Gastrocnemius medialis (tissue), 4 donors: ENCODE measurements at regions of chr4 and their contacts with region 1.

Region 1: DNA sequence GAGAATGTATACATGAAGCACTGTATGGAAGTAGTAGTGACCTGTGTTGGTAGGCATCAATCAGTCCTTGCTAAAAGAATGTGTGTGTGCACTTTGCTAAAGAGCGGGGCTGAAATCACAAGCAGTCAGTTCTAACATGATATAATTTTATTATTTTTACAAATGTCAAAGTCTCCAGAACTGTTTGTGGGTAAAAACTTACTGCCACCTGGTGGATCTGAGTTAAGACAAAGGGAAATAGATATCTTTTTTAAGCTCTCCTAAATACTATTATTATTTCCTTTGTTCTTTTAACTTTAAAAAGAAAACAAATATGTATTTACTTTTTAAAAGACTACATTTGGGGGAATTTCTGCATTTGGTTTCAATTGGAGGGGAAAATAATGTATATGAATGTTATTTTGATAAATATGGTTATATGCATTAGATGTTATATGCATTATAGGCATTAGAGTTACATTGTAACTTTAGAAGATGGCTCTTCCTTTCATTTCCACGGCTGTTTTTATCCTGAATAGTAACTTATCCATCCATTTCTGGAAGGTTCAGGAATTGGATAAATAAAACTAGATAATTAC is 7.8 kb upstream of the CLOCK start:
- DNase-seq: no peak
- ATAC-seq: no peak
- H3K4me3 ChIP-seq: no peak overlapping the region
- H3K27ac ChIP-seq: no peak overlapping the region
- H3K4me1 ChIP-seq: no peaks in the 10 kb centered on the region
- H3K27me3 ChIP-seq: no peaks in the 10 kb centered on the region
- CTCF ChIP-seq: peak in 2 of 5 experiments; percentile 34 to 52
- POLR2A ChIP-seq: no peak

Region 2: DNA sequence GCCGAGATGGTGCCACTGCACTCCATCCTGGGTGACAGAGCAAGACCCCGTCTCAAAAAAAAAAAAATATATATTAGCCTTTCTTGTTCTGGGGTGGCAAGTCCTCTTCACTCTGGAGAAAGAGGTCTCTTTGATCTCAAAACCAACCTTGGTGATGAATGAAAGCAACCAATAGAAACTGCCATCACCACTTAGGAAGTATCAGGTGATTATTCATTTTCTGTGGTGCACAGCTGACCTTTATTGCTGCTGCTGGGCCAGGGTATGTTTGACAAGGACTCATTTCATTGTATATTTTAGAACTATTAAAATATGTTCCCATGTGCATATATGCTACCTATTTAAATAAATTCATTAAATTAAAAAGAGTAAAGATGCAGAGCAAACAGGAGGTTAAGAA is 972.7 kb before region 1 on chr4:
- in situ Hi-C with region 1: no loop called
- intact Hi-C with region 1: no loop called
- DNase-seq: no peak
- ATAC-seq: no peak
- H3K4me3 ChIP-seq: no peak overlapping the region
- H3K27ac ChIP-seq: no peak overlapping the region
- H3K4me1 ChIP-seq: no peaks in the 10 kb centered on the region
- H3K27me3 ChIP-seq: no peaks in the 10 kb centered on the region
- CTCF ChIP-seq: no peak
- POLR2A ChIP-seq: no peak

Region 3: DNA sequence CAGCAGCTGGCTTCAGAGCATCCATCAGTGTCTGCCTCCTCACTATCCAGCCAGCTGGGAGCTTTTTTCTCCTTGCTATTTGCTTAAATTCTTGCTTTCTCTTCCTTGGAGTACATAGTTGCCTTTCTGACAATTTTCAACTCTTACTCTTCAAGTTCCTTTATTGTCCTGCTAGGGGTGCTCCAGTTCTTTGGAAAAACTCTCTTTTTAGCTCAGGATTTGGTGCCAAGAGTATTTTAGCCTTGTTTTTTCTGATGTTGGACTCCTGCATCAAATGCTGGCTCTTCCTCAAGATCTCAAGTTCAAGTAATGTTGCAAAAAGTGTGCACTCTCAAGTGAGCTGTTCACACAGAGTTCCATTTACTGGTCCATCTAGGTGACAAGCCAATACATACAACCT is 555.5 kb before region 1 on chr4:
- in situ Hi-C with region 1: loop called in 1 of 4 experiments (anchors 25 kb)
- intact Hi-C with region 1: no loop called
- DNase-seq: no peak
- ATAC-seq: peak in 1 of 2 donors; percentile 50
- H3K4me3 ChIP-seq: no peak overlapping the region
- H3K27ac ChIP-seq: no peak overlapping the region
- H3K4me1 ChIP-seq: no peaks in the 10 kb centered on the region
- H3K27me3 ChIP-seq: no peaks in the 10 kb centered on the region
- CTCF ChIP-seq: peak in 4 of 5 experiments; percentile 9 to 40 (median 32)
- POLR2A ChIP-seq: no peak

Region 4: DNA sequence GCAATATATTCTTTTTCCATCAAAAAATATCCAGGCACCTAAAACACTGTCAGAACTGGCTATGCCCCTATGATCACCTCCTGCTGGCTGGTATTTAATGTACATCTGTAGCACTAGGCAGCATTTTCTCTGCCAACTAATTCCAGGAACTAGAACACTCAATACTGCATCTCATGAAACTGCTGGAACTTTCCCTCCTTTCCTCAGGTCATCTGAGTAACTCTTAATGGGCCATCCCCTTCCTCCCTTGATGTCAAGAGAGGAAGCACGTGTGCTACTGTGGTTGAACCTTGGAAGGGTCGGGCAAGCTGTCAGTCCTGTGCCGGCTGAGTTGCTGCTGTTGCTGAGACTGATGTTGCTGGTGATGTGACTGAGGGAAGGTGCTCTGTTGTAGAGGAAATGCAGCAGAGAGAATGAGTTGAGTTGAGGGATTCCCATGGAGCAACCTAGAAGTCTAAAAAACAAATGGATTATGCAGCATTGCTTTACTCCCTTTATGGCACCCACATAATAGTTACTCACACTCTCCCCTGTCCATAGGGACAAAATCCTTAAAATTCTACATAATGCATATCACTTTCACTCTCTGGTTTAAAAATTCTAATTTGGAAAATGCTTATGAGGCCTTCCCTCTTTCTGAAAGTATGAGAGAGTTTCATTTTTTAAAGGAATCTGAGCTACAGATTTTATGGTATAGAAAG is 119.3 kb before region 1 on chr4:
- in situ Hi-C with region 1: no loop called
- intact Hi-C with region 1: no loop called
- DNase-seq: no peak
- ATAC-seq: no peak
- H3K4me3 ChIP-seq: no peak overlapping the region
- H3K27ac ChIP-seq: no peak overlapping the region
- H3K4me1 ChIP-seq: no peaks in the 10 kb centered on the region
- H3K27me3 ChIP-seq: no peaks in the 10 kb centered on the region
- CTCF ChIP-seq: no peak
- POLR2A ChIP-seq: no peak

Region 5: DNA sequence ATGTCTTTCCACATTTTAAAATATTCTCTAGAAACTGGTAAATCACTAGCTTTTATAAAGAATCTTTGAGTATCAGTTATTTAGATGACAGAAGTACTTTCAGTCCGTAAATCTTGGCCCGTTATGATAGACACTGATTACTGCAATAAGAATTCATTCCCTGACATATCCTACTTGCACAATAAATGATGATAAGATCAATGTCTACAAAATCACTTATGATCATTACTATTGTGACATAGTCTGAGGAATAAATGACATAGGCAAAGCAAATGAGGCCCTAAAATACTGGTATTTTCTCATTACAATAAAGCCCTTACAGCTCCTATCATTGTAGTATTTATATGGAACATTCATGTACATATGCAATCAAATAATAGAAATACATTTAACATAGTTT is 44.1 kb after region 1 on chr4:
- in situ Hi-C with region 1: no loop called
- intact Hi-C with region 1: no loop called
- DNase-seq: no peak
- ATAC-seq: no peak
- H3K4me3 ChIP-seq: no peak overlapping the region
- H3K27ac ChIP-seq: no peak overlapping the region
- H3K4me1 ChIP-seq: no peaks in the 10 kb centered on the region
- H3K27me3 ChIP-seq: no peaks in the 10 kb centered on the region
- CTCF ChIP-seq: no peak
- POLR2A ChIP-seq: no peak

Region 6: GRCh38 chr4:55758570-55758969 is 204.0 kb after region 1 on chr4:
- in situ Hi-C with region 1: no loop called
- intact Hi-C with region 1: no loop called
- DNase-seq: no peak
- ATAC-seq: no peak
- H3K4me3 ChIP-seq: no peak overlapping the region
- H3K27ac ChIP-seq: no peak overlapping the region
- H3K4me1 ChIP-seq: no peaks in the 10 kb centered on the region
- H3K27me3 ChIP-seq: no peaks in the 10 kb centered on the region
- CTCF ChIP-seq: no peak
- POLR2A ChIP-seq: no peak